B cell (primary cell): ENCODE measurements at regions of chr9 and their contacts with region 1.

Region 1: DNA sequence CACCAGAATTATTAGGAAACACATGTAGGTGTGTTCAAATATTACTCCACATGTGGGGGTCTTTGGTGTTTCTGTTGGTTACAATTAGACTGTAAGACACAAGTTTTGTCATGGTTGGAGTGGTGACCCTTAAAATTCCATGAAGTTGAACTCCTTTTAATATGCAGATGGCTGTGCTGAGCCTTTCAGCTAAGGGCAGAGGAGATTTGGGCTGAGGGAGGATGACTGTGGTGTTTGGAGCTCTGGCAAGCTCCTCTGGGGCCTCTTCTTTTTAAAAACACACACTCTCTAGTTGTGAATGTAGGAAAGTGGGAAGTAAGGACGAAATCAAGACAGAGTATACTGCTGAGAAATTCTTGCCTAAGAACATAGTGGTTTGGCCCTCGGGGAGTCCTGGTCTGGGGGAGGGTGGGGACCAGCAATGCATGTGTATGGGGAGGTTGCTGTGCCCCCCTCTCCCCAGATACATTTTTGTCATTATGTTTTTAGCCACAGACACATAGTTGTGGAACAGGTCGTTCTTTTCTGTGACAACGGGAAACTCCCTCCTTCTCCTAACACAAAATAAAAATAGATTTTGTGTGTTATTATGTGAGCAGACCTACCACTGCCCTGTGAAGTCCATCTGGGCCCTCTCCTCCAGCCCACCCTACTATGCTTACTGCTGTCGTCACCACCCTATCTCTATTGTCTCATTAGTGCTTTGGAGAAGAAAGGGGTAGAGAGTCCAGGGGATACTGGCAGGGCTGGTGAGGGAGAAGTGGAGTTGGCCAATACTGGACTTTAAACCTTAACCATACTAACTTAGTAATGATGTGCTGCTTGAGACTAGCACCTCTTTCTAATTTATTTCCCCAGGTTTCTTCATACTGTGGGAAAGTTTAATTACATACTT is 10.0 kb downstream of the SMARCA2 start:
- DNase-seq: no peak
- ATAC-seq: no peak
- H3K4me3 ChIP-seq: no peak overlapping the region
- H3K4me3 Mint-ChIP-seq: peak overlapping the region; percentile 15
- H3K27ac ChIP-seq: no peak overlapping the region
- H3K27ac Mint-ChIP-seq: no peak overlapping the region
- H3K4me1 ChIP-seq: peaks cover 55 to 67% of the 10 kb centered on the region in 2 donors
- H3K4me1 Mint-ChIP-seq: peaks cover 79% of the 10 kb centered on the region
- H3K27me3 ChIP-seq: no peaks in the 10 kb centered on the region
- H3K27me3 Mint-ChIP-seq: no peaks in the 10 kb centered on the region
- CTCF ChIP-seq: no peak

Region 2: DNA sequence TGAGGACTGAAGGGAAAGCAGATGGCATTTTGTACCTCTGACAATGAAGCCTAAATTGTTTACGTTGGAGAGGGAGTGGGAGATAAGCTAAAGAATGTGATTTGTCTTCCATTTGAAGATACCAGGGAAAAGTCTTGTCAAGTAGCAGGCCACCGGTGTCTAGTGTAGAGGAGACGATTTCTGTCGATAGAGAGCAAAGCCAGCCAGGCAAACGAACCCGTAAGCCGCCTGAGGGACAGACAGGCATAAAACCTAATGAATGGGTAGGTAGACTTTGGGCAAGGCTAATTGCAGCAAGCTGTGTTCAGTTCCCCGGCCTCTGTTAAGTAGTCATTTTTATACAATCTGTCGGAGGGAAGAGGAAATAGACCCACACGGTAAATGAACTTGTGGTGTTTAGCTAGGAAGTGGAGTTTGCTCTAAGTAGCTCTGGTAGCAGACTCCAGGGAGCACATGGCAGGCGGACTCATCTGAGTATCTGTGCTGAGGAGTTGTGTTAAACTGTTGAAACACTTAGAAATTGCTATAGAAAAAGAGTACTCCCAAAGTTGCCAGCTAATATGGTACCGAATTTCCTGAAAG is 18.8 kb after region 1 on chr9:
- CTCF ChIA-PET with region 1: no interaction called
- POLR2A ChIA-PET with region 1: no interaction called
- intact Hi-C with region 1: loop called (anchors 2 kb)
- DNase-seq: peak; percentile 48
- ATAC-seq: peak; percentile 66
- H3K4me3 ChIP-seq: peak overlapping the region in 3 of 5 experiments; percentile 4 to 30 (median 26)
- H3K4me3 Mint-ChIP-seq: peak overlapping the region; percentile 81
- H3K27ac ChIP-seq: peak overlapping the region; percentile 40 to 72
- H3K27ac Mint-ChIP-seq: peak overlapping the region; percentile 87
- H3K4me1 ChIP-seq: peaks cover 22 to 30% of the 10 kb centered on the region in 2 donors
- H3K4me1 Mint-ChIP-seq: peaks cover 37% of the 10 kb centered on the region
- H3K27me3 ChIP-seq: no peaks in the 10 kb centered on the region
- H3K27me3 Mint-ChIP-seq: no peaks in the 10 kb centered on the region
- CTCF ChIP-seq: no peak